OCI-LY7 (cell line): ENCODE measurements at regions of chr10 and their contacts with region 1.

Region 1: DNA sequence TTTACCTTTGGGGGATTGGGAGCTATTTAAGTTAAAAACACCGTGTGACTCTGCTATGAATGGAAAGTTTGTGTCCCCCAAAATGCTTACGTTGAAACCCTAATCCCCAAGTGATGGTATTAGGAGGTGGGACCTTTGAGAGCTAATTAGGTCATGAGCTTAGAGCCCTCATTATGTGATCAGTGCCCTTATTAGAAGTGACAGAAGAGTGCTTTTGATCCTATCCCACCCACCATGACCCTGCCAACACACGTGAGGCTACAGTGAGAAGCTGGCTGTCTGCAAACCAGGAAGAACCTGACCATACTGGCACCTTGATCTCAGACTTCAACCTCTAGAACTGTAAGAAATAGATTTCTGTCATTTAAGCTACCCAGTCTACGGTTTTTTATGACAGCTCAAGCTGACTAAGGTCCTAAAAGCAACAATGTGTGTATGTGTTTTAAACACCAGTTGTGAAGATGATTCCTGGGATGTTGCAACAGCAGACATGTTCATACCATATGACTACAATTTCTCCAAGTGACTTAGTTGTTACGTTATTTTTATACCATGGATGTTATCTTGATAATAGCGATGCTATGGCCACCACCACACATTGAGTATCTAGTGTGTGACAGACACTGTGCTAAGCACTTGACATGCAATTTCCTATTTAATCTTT is 124.4 kb downstream of the PIP4K2A start:
- DNase-seq: no peak
- H3K4me3 ChIP-seq: no peak overlapping the region
- H3K27ac ChIP-seq: no peak overlapping the region
- H3K4me1 ChIP-seq: peaks cover 18% of the 10 kb centered on the region
- CTCF ChIP-seq: no peak

Region 2: GRCh38 chr10:22003079-22003913 is 586.7 kb before region 1 on chr10 and contains the start of gene DNAJC1:
- CTCF ChIA-PET with region 1: no interaction called
- POLR2A ChIA-PET with region 1: interaction called, 3 read pairs
- intact Hi-C with region 1: loop called (anchors 5 kb)
- DNase-seq: peak; percentile 96
- H3K4me3 ChIP-seq: peak within 1 kb of the TSS; percentile 80
- H3K27ac ChIP-seq: peak within 1 kb of the TSS; percentile 40
- H3K4me1 ChIP-seq: peaks cover 26% of the 10 kb centered on the region
- CTCF ChIP-seq: no peak
- total RNA-seq, gene DNAJC1: 12.1 and 16.9 TPM in 2 replicates

Region 3: DNA sequence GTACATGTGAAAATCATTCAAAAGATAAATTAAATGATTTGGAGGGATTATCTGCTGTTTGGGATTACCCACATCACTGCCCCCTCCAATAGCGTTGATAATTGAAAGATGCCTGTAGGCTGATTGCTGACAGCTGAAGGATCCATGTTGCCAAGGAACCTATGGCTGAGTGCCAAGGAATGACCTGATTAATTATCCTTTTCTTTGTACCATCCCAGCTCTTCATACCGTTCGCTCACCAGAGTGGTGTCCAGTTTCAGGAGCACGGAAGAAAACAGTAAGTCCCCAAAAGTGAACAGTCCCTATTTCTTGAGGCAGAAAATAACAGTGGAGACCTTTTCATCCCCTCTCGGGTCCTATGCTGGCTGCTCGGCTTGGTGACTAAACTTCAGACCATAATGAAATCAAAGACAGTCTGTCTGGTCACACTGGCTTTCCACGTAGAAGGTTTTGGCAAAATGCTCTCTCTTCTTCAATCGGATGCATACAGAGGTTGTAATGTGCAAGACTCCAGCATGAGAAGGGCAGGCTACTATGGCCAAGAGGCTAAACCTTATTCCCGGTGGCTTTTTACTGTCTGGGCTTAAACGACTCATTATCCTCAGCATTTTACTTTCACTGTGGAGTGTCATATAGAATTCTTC is 135.9 kb before region 1 on chr10:
- CTCF ChIA-PET with region 1: no interaction called
- POLR2A ChIA-PET with region 1: no interaction called
- intact Hi-C with region 1: no loop called
- DNase-seq: no peak
- H3K4me3 ChIP-seq: no peak overlapping the region
- H3K27ac ChIP-seq: no peak overlapping the region
- H3K4me1 ChIP-seq: peaks cover 2% of the 10 kb centered on the region
- CTCF ChIP-seq: no peak

Region 4: GRCh38 chr10:22554461-22555182 is 35.4 kb before region 1 on chr10:
- CTCF ChIA-PET with region 1: no interaction called
- POLR2A ChIA-PET with region 1: no interaction called
- intact Hi-C with region 1: no loop called
- DNase-seq: no peak
- H3K4me3 ChIP-seq: no peak overlapping the region
- H3K27ac ChIP-seq: no peak overlapping the region
- H3K4me1 ChIP-seq: no peaks in the 10 kb centered on the region
- CTCF ChIP-seq: no peak

Region 5: GRCh38 chr10:22962817-22963216 is 372.8 kb after region 1 on chr10:
- CTCF ChIA-PET with region 1: no interaction called
- POLR2A ChIA-PET with region 1: no interaction called
- intact Hi-C with region 1: no loop called
- DNase-seq: no peak
- H3K4me3 ChIP-seq: no peak overlapping the region
- H3K27ac ChIP-seq: no peak overlapping the region
- H3K4me1 ChIP-seq: no peaks in the 10 kb centered on the region
- CTCF ChIP-seq: no peak